CD4-positive, alpha-beta T cell (primary cell): ENCODE measurements at regions of chr3 and their contacts with region 1.

Region 1: GRCh38 chr3:128095222-128095703 is 28.3 kb downstream of the RUVBL1 start:
- DNase-seq: peak; percentile 69 to 87 (median 78)
- ATAC-seq: peak; percentile 100
- H3K4me3 ChIP-seq: no peak overlapping the region
- H3K4me3 Mint-ChIP-seq: no peak overlapping the region
- H3K27ac ChIP-seq: no peak overlapping the region
- H3K27ac Mint-ChIP-seq: no peak overlapping the region
- H3K4me1 ChIP-seq: no peaks in the 10 kb centered on the region
- H3K4me1 Mint-ChIP-seq: peaks cover 7% of the 10 kb centered on the region
- H3K27me3 ChIP-seq: no peaks in the 10 kb centered on the region
- H3K27me3 Mint-ChIP-seq: no peaks in the 10 kb centered on the region
- CTCF ChIP-seq: peak; percentile 87

Region 2: GRCh38 chr3:128123538-128124368 is 28.5 kb after region 1 on chr3 and contains the start of gene RUVBL1:
- CTCF ChIA-PET with region 1: interaction called, 10 read pairs
- POLR2A ChIA-PET with region 1: interaction called, 8 read pairs
- intact Hi-C with region 1: no loop called
- DNase-seq: peak; percentile 91 to 99 (median 95)
- ATAC-seq: peak; percentile 93
- H3K4me3 ChIP-seq: peak within 1 kb of the TSS; percentile 98
- H3K4me3 Mint-ChIP-seq: peak within 1 kb of the TSS; percentile 95
- H3K27ac ChIP-seq: peak within 1 kb of the TSS; percentile 67 to 84
- H3K27ac Mint-ChIP-seq: peak within 1 kb of the TSS; percentile 93
- H3K4me1 ChIP-seq: peaks cover 21% of the 10 kb centered on the region
- H3K4me1 Mint-ChIP-seq: peaks cover 28% of the 10 kb centered on the region
- H3K27me3 ChIP-seq: no peaks in the 10 kb centered on the region
- H3K27me3 Mint-ChIP-seq: no peaks in the 10 kb centered on the region
- CTCF ChIP-seq: no peak
- total RNA-seq, gene RUVBL1: 5.6 to 7.7 TPM

Region 3: GRCh38 chr3:128133273-128134084 is 38.2 kb after region 1 on chr3:
- CTCF ChIA-PET with region 1: interaction called, 61 read pairs
- POLR2A ChIA-PET with region 1: interaction called, 7 read pairs
- intact Hi-C with region 1: loop called (anchors 1 kb)
- DNase-seq: peak in 13 of 14 experiments; percentile 23 to 70 (median 41)
- ATAC-seq: peak; percentile 78
- H3K4me3 ChIP-seq: no peak overlapping the region
- H3K4me3 Mint-ChIP-seq: no peak overlapping the region
- H3K27ac ChIP-seq: no peak overlapping the region
- H3K27ac Mint-ChIP-seq: no peak overlapping the region
- H3K4me1 ChIP-seq: no peaks in the 10 kb centered on the region
- H3K4me1 Mint-ChIP-seq: no peaks in the 10 kb centered on the region
- H3K27me3 ChIP-seq: no peaks in the 10 kb centered on the region
- H3K27me3 Mint-ChIP-seq: peaks cover 4% of the 10 kb centered on the region
- CTCF ChIP-seq: peak; percentile 66

Region 4: GRCh38 chr3:128145337-128145736 is 50.1 kb after region 1 on chr3:
- CTCF ChIA-PET with region 1: no interaction called
- POLR2A ChIA-PET with region 1: no interaction called
- intact Hi-C with region 1: no loop called
- DNase-seq: peak in 3 of 14 experiments; percentile 13 to 47 (median 43)
- ATAC-seq: no peak
- H3K4me3 ChIP-seq: no peak overlapping the region
- H3K4me3 Mint-ChIP-seq: no peak overlapping the region
- H3K27ac ChIP-seq: no peak overlapping the region
- H3K27ac Mint-ChIP-seq: no peak overlapping the region
- H3K4me1 ChIP-seq: no peaks in the 10 kb centered on the region
- H3K4me1 Mint-ChIP-seq: no peaks in the 10 kb centered on the region
- H3K27me3 ChIP-seq: no peaks in the 10 kb centered on the region
- H3K27me3 Mint-ChIP-seq: no peaks in the 10 kb centered on the region
- CTCF ChIP-seq: no peak

Region 5: DNA sequence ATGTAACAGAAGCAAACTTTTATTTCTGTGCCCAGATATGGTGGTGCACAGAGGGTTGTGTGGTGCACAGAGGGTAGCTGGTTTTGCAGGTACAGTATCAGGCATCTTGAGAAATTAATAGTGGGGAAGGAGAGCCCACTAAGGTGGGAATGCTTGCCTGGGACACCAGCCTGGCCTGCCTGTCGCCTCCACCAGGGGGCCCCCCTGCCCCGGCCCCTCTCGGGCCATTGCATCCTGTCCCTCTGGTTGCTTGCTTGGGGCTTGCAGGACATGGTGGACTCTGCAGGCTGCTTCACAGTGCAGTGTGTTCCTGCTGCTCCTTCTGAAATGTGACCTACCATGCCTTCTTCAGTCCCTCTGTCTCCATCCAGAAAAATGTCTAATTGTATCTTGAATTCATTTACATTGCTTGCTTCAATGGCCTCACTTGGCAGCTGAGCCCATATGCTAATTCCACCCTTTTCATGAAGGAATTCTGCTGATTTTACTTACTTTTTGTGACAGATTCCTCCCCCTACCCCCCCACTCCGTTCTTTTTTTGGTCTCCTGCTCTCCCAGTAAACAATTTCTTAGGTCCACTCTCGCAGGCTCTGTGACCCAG is 131.6 kb after region 1 on chr3:
- CTCF ChIA-PET with region 1: no interaction called
- POLR2A ChIA-PET with region 1: no interaction called
- intact Hi-C with region 1: loop called in 1 of 2 experiments (anchors 10 kb)
- DNase-seq: peak in 13 of 14 experiments; percentile 6 to 52 (median 19)
- ATAC-seq: peak; percentile 48
- H3K4me3 ChIP-seq: no peak overlapping the region
- H3K4me3 Mint-ChIP-seq: no peak overlapping the region
- H3K27ac ChIP-seq: no peak overlapping the region
- H3K27ac Mint-ChIP-seq: no peak overlapping the region
- H3K4me1 ChIP-seq: peaks cover 9% of the 10 kb centered on the region
- H3K4me1 Mint-ChIP-seq: peaks cover 35% of the 10 kb centered on the region
- H3K27me3 ChIP-seq: no peaks in the 10 kb centered on the region
- H3K27me3 Mint-ChIP-seq: no peaks in the 10 kb centered on the region
- CTCF ChIP-seq: peak; percentile 68

Region 6: DNA sequence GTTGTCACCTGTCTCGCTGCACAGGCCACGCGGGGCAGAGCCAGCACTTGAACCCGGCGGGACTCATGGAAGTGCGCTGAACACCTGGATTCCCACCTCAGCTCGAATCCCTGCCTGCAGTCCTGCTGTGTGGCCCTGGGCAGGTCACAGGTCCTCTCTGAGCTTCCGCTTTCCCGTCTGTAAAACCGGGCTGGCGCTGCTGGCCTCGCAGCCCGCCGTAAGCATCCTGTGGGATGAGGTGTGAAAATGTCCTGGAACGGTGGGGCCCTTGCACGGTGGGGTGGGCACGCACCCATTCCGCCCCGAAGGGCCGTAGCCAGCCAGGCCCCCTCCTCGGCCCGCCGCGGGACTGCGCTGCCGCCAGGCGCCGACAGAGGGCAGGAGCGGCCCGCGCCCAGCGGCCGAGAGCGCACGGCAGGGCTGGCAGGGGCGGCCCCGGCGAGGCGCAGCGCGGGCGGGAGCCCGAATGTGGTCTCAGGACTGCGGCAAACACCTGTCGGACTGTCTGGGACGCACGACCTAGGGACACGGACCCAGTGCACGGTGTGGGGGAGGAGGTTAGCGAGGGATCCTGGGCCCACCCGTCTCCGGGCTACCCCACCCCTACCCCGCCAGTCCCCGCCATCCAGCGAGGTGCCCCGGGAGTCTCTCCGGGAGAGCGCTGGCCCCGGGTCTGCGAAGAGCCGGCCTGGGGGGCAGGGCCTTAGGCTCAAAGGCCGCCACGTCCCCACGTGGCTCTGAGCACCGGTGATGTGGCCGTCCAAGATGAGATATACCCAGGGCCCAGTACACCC is 331.1 kb after region 1 on chr3:
- CTCF ChIA-PET with region 1: no interaction called
- POLR2A ChIA-PET with region 1: no interaction called
- intact Hi-C with region 1: loop called in 1 of 2 experiments (anchors 5 kb)
- DNase-seq: peak; percentile 19 to 80 (median 46)
- ATAC-seq: peak; percentile 96
- H3K4me3 ChIP-seq: peak overlapping the region; percentile 25
- H3K4me3 Mint-ChIP-seq: no peak overlapping the region
- H3K27ac ChIP-seq: no peak overlapping the region
- H3K27ac Mint-ChIP-seq: no peak overlapping the region
- H3K4me1 ChIP-seq: peaks cover 9% of the 10 kb centered on the region
- H3K4me1 Mint-ChIP-seq: no peaks in the 10 kb centered on the region
- H3K27me3 ChIP-seq: peaks cover 7 to 18% of the 10 kb centered on the region in 2 experiments
- H3K27me3 Mint-ChIP-seq: peaks cover 32% of the 10 kb centered on the region
- CTCF ChIP-seq: peak; percentile 66

Region 7: GRCh38 chr3:128607710-128608048 is 512.4 kb after region 1 on chr3:
- CTCF ChIA-PET with region 1: no interaction called
- POLR2A ChIA-PET with region 1: no interaction called
- intact Hi-C with region 1: loop called in 1 of 2 experiments (anchors 1 kb)
- DNase-seq: no peak
- ATAC-seq: no peak
- H3K4me3 ChIP-seq: peak overlapping the region; percentile 62
- H3K4me3 Mint-ChIP-seq: no peak overlapping the region
- H3K27ac ChIP-seq: no peak overlapping the region
- H3K27ac Mint-ChIP-seq: no peak overlapping the region
- H3K4me1 ChIP-seq: peaks cover 12% of the 10 kb centered on the region
- H3K4me1 Mint-ChIP-seq: no peaks in the 10 kb centered on the region
- H3K27me3 ChIP-seq: peaks cover 5 to 10% of the 10 kb centered on the region in 2 experiments
- H3K27me3 Mint-ChIP-seq: no peaks in the 10 kb centered on the region
- CTCF ChIP-seq: no peak